Activated CD4-positive, alpha-beta memory T cell treated with anti-CD3 and anti-CD28 coated beads for 36 hours (primary cell): ENCODE measurements at regions of chr5 and their contacts with region 1.

Region 1: GRCh38 chr5:148799737-148800527 is 26.5 kb upstream of the ADRB2 start:
- DNase-seq: peak; percentile 59
- H3K4me3 Mint-ChIP-seq: no peak overlapping the region
- H3K27ac Mint-ChIP-seq: peak overlapping the region; percentile 4
- H3K4me1 Mint-ChIP-seq: peaks cover 40% of the 10 kb centered on the region
- H3K27me3 Mint-ChIP-seq: peaks cover 23% of the 10 kb centered on the region

Region 2: GRCh38 chr5:148457183-148457620 is 342.7 kb before region 1 on chr5:
- CTCF ChIA-PET with region 1: no interaction called
- POLR2A ChIA-PET with region 1: no interaction called
- intact Hi-C with region 1: no loop called
- DNase-seq: no peak
- H3K4me3 Mint-ChIP-seq: no peak overlapping the region
- H3K27ac Mint-ChIP-seq: no peak overlapping the region
- H3K4me1 Mint-ChIP-seq: no peaks in the 10 kb centered on the region
- H3K27me3 Mint-ChIP-seq: peaks cover 22% of the 10 kb centered on the region

Region 3: GRCh38 chr5:148697180-148697808 is 102.6 kb before region 1 on chr5:
- CTCF ChIA-PET with region 1: no interaction called
- POLR2A ChIA-PET with region 1: no interaction called
- intact Hi-C with region 1: no loop called
- DNase-seq: no peak
- H3K4me3 Mint-ChIP-seq: no peak overlapping the region
- H3K27ac Mint-ChIP-seq: no peak overlapping the region
- H3K4me1 Mint-ChIP-seq: no peaks in the 10 kb centered on the region
- H3K27me3 Mint-ChIP-seq: peaks cover 17% of the 10 kb centered on the region

Region 4: DNA sequence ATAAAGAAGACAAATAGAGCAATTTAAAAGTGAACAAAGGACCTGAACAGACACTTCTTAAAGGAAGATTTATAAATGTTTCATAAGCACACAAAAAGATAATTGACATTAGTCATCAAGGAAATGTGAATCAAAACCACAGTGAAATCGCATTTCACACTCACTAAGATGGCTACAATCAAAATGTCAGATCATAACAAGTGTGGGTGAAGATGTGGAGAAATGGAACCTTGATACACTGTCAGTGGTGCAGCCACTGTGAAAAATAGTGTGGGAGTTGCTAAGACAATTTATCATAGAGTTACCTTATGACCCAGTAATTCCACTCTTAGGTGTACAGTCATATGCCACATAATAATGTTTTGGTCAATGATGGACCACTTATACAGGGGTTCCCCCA is 91.1 kb before region 1 on chr5:
- CTCF ChIA-PET with region 1: no interaction called
- POLR2A ChIA-PET with region 1: no interaction called
- intact Hi-C with region 1: loop called (anchors 2 kb)
- DNase-seq: peak; percentile 48
- H3K4me3 Mint-ChIP-seq: no peak overlapping the region
- H3K27ac Mint-ChIP-seq: no peak overlapping the region
- H3K4me1 Mint-ChIP-seq: peaks cover 15% of the 10 kb centered on the region
- H3K27me3 Mint-ChIP-seq: peaks cover 25% of the 10 kb centered on the region

Region 5: DNA sequence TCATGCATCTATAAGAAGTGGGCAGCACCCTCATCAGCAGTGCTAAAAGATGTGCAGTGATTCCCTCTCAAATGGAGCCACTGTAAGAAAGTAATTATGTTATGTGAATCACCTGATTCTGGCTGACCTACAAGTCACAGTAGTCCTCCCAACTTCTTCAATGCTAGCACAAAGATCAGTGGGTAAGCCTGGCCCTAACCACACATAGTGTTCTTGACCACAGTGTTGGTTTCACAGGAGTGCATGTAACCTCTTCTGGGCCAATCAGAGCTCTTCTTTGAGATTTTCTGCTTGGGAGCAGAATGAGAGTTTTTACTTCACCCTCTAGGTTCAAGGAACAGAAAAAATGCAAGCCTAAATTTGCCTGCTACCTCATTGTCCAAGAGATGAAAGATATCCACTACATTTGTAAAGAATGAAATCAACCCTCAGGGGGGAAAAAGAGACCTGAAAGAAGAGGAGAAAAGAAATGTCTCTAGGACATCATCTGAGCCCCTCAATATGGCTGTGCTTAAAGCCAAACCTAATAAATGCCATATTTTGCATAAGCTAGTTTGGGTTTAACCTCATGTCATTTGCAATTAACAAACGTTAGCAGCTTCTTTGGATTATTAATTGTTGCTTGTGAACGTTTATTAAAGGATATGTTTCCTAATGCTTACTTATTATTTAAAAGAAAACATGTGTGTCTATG is 38.8 kb before region 1 on chr5:
- CTCF ChIA-PET with region 1: no interaction called
- POLR2A ChIA-PET with region 1: no interaction called
- intact Hi-C with region 1: no loop called
- DNase-seq: no peak
- H3K4me3 Mint-ChIP-seq: no peak overlapping the region
- H3K27ac Mint-ChIP-seq: no peak overlapping the region
- H3K4me1 Mint-ChIP-seq: no peaks in the 10 kb centered on the region
- H3K27me3 Mint-ChIP-seq: peaks cover 11% of the 10 kb centered on the region

Region 6: GRCh38 chr5:148820461-148821395 is 20.8 kb after region 1 on chr5:
- CTCF ChIA-PET with region 1: interaction called, 11 read pairs
- POLR2A ChIA-PET with region 1: interaction called, 3 read pairs
- intact Hi-C with region 1: no loop called
- DNase-seq: no peak
- H3K4me3 Mint-ChIP-seq: no peak overlapping the region
- H3K27ac Mint-ChIP-seq: no peak overlapping the region
- H3K4me1 Mint-ChIP-seq: peaks cover 6% of the 10 kb centered on the region
- H3K27me3 Mint-ChIP-seq: peaks cover 5% of the 10 kb centered on the region